Activated T-helper 1 cell treated with anti-CD3 and anti-CD28 coated beads, Interleukin-12 subunit alpha, Interleukin-12 subunit beta, Interleukin-2, Interleukin-4 antibody, amounts not matched to agents 30 ng/mL and 10 ng/mL and 1 ng/mL, durations not matched to agents 14 hours and 24 hours and 36 hours (primary cell): ENCODE measurements at regions of chr6 and their contacts with region 1.

Region 1: DNA sequence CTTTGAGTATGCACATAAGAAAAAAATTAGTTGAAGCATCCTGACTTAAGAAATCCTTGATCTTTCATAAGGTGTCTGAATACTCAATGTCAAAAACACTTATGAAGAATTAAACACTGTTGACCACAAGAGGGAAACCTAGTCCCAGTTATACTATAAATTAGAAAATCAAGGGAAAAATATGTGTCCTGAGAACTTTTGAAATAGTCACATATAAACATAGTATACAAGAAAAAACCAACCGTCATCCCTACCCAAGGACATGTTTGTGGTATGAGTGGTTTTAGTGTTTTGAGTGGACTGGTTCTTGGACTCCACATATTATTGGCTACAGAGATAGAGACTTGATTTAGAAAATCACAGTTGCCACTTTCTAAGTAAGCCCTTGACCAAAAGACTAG is 7.6 kb upstream of the HLA-DRA start:
- DNase-seq: no peak
- H3K4me3 Mint-ChIP-seq: no peak overlapping the region
- H3K27ac Mint-ChIP-seq: no peak overlapping the region
- H3K4me1 Mint-ChIP-seq: no peaks in the 10 kb centered on the region
- H3K27me3 Mint-ChIP-seq: peaks cover 31% of the 10 kb centered on the region

Region 2: DNA sequence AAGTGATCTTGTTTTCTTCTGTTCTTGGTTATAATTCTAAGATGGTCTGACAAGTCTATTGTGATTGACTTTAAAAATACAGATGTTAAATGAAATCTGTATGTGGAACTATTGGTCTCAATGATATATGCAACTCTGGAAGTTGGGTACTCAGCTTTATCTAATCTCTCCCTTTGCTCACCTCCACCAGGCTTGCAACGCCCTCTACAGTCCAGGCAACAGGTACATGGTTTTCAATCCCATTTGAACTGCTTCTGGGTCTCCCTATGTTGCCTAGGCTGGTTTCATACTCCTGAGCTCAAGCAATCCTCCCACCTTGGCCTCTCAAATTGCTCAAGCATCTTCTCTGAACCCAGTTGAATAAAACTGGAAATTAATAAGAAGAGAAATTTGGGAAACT is 260.0 kb after region 1 on chr6:
- intact Hi-C with region 1: loop called (anchors 1 kb)
- DNase-seq: peak; percentile 32
- H3K4me3 Mint-ChIP-seq: no peak overlapping the region
- H3K27ac Mint-ChIP-seq: no peak overlapping the region
- H3K4me1 Mint-ChIP-seq: peaks cover 18% of the 10 kb centered on the region
- H3K27me3 Mint-ChIP-seq: peaks cover 43% of the 10 kb centered on the region

Region 3: DNA sequence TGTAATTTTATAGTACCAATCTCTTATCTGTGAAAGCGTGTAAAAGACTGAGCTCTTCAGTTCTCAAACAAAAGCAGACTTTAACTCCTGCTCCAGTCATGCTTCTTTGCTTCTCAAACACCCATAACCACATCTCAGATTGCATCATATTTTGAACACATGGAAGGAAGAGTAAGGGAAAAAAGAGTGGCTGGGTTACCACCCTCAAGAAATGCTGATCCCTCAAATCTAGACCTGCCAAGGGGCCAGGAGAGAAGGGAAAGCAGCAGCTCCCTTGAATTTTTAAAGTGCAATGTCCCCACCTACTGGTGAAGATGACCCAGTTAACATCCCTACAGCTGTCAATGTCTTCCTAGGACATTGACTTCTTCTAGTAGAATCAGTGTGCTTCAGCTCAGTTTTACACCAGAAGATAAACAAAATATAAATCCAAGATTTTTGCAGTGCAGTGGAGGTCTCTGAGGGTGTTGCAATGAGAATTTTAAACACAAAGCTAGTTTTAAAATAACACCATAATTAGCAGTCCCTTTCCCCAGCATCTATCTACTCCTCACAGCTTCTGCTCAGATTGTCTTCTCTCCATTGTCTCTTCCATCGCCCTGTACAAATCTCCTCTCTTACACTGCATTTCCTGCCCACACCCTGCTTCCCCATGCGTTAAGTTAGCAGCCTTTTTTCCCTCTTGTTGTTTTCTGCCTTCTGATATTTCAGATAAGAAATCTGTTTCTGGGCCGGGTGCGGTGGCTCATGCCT is 353.9 kb after region 1 on chr6:
- intact Hi-C with region 1: loop called (anchors 1 kb)
- DNase-seq: peak; percentile 25
- H3K4me3 Mint-ChIP-seq: no peak overlapping the region
- H3K27ac Mint-ChIP-seq: no peak overlapping the region
- H3K4me1 Mint-ChIP-seq: no peaks in the 10 kb centered on the region
- H3K27me3 Mint-ChIP-seq: peaks cover 56% of the 10 kb centered on the region